ENCODE measurements at regions of chr15 and their contacts with region 1.

Region 1: GRCh38 chr15:56918046-56918938 is at the start of gene TCF12:
- DNase-seq: peak; percentile 97
- ATAC-seq: peak; percentile 98
- total RNA-seq, gene TCF12: 155 TPM

Region 2: DNA sequence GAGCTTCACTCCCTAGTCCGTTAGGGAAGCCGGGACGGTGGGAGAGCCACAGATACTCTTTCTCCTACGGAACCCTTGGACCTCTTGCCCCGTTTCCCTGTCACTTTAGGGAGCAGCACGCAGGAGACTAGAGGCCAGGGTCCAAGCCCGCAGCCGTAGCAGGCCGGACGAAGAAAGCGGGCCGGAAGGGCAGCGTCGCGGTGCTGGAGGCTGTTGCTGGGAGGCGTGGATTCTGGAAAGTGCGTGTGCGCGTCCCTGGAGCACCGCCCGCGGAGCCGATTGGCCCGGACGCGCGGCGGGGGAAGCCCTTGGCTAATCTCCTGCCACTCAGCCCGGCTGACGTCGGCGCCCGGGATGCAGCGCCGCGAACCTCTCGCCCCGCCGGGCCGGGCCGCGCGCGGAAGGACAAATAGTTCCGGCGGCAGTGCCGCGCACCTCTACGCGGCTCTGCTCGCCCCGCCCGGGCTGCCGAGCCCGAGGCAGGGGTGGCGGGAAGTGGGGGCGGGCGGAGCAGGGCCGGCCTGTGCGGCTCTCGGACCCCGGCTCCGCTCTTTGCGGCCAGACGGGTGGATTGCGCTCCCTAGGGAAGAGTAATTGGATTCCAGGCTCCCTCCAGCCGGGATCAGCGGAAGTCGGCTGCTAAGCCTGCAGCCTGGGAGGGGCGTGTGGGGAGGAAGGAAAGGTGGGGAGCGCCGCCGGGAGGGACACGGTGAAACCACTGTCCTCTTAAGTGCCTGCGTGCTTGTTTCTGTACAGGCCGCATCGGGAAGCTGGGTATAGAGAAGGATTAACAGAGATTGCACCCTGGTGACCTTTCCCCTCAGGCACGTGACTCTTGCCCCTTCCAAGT is 31.1 kb before region 1 on chr15:
- intact Hi-C with region 1: loop called (anchors 2 kb)
- DNase-seq: peak; percentile 95
- ATAC-seq: peak; percentile 99

Measured in sciatic nerve (tissue), 2 donors.